CD4-positive, alpha-beta memory T cell (primary cell): ENCODE measurements at regions of chr13 and their contacts with region 1.

Region 1: DNA sequence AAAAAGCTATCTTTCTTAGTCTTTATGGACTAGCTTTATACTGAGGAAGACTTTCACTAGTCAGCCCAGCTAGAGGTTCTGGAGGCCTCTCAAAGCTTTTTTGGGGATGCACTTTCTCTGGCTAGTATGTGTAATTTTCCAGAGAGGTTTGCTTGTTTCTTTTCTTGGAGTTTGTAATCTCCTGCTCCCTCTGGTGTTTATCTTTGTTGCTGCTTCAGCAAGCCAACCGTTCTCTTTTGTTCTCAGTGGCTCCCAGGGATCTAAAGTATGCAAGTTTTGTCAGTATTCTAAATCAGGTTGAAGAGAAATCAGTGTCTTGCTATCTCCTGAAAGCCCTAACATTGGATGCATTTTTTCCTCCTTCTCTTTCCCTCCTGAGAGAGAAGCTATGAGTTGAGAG is 121.1 kb upstream of the MYO16 start:
- DNase-seq: peak in 4 of 5 donors; percentile 22 to 49 (median 28)
- H3K4me3 ChIP-seq: no peak overlapping the region
- H3K4me3 Mint-ChIP-seq: no peak overlapping the region
- H3K27ac ChIP-seq: no peak overlapping the region
- H3K27ac Mint-ChIP-seq: peak overlapping the region in 1 of 7 donors; percentile 21
- H3K4me1 ChIP-seq: peaks cover 3% of the 10 kb centered on the region
- H3K4me1 Mint-ChIP-seq: peaks cover 1 to 29% (median 7%) of the 10 kb centered on the region in 4 donors
- H3K27me3 ChIP-seq: no peaks in the 10 kb centered on the region
- H3K27me3 Mint-ChIP-seq: no peaks in the 10 kb centered on the region

Region 2: GRCh38 chr13:106772006-106772601 is 1736.2 kb before region 1 on chr13:
- CTCF ChIA-PET with region 1: no interaction called
- POLR2A ChIA-PET with region 1: no interaction called
- intact Hi-C with region 1: no loop called
- DNase-seq: no peak
- H3K4me3 ChIP-seq: no peak overlapping the region
- H3K4me3 Mint-ChIP-seq: no peak overlapping the region
- H3K27ac ChIP-seq: no peak overlapping the region
- H3K27ac Mint-ChIP-seq: no peak overlapping the region
- H3K4me1 ChIP-seq: no peaks in the 10 kb centered on the region
- H3K4me1 Mint-ChIP-seq: no peaks in the 10 kb centered on the region
- H3K27me3 ChIP-seq: no peaks in the 10 kb centered on the region
- H3K27me3 Mint-ChIP-seq: no peaks in the 10 kb centered on the region

Region 3: GRCh38 chr13:108176685-108177274 is 331.5 kb before region 1 on chr13:
- CTCF ChIA-PET with region 1: interaction called, 6 read pairs
- POLR2A ChIA-PET with region 1: no interaction called
- intact Hi-C with region 1: loop called (anchors 5 kb)
- DNase-seq: peak; percentile 33 to 58 (median 38)
- H3K4me3 ChIP-seq: no peak overlapping the region
- H3K4me3 Mint-ChIP-seq: no peak overlapping the region
- H3K27ac ChIP-seq: no peak overlapping the region
- H3K27ac Mint-ChIP-seq: no peak overlapping the region
- H3K4me1 ChIP-seq: no peaks in the 10 kb centered on the region
- H3K4me1 Mint-ChIP-seq: no peaks in the 10 kb centered on the region
- H3K27me3 ChIP-seq: no peaks in the 10 kb centered on the region
- H3K27me3 Mint-ChIP-seq: peaks cover 0 to 7% of the 10 kb centered on the region in 2 donors

Region 4: DNA sequence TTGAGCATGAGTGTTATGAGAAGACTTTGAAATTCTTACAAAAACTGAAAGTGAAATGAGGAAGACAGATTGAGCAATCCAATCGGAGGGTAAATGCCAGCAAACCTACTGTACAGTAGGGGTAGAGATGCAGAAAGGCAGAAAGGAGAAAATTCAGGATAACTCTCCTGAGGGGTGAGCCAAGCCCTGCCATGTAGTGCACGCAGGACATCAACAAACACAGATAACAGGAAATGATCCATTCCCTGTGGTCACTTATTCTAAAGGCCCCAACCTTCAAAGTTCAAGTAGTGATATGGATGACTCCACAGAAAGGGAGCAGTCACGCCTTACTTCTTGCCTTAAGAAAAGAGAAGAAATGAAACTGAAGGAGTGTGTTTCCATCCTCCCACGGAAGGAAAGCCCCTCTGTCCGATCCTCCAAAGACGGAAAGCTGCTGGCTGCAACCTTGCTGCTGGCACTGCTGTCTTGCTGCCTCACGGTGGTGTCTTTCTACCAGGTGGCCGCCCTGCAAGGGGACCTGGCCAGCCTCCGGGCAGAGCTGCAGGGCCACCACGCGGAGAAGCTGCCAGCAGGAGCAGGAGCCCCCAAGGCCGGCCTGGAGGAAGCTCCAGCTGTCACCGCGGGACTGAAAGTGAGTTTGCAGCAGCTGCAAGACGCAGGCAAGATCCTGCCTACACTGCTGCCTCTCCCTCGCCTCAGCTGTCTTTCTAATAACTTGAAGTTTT is 238.5 kb before region 1 on chr13 and contains the start of gene TNFSF13B:
- CTCF ChIA-PET with region 1: interaction called, 13 read pairs
- POLR2A ChIA-PET with region 1: no interaction called
- intact Hi-C with region 1: no loop called
- DNase-seq: peak; percentile 16 to 60 (median 28)
- H3K4me3 ChIP-seq: peak within 1 kb of the TSS; percentile 49 to 58
- H3K4me3 Mint-ChIP-seq: peak within 1 kb of the TSS; percentile 83 to 95 (median 90)
- H3K27ac ChIP-seq: peak within 1 kb of the TSS; percentile 51
- H3K27ac Mint-ChIP-seq: peak within 1 kb of the TSS; percentile 81 to 94 (median 90)
- H3K4me1 ChIP-seq: peaks cover 31% of the 10 kb centered on the region
- H3K4me1 Mint-ChIP-seq: peaks cover 32 to 72% (median 47%) of the 10 kb centered on the region in 4 donors
- H3K27me3 ChIP-seq: no peaks in the 10 kb centered on the region
- H3K27me3 Mint-ChIP-seq: no peaks in the 10 kb centered on the region
- total RNA-seq, gene TNFSF13B: 35.8 to 37.9 TPM

Region 5: DNA sequence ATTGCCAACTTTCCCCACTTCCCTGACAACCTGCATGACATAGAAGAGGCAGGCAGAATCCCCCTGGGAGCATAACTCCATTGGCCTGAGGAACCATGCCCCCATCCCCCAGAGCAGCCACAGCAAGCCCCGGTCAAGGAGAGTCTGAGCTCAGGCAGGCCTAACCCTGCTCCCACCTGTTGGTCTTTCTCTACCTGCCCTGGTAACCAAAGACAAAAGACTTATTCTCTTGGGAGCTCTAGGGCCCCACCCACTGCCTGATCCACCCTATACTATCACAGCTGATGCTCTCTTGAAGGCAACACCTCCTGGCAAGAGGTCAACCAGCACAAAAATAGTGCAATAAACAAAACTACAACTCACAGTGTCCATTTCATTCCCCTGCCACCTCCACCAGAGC is 179.4 kb before region 1 on chr13:
- CTCF ChIA-PET with region 1: interaction called, 114 read pairs
- POLR2A ChIA-PET with region 1: interaction called, 3 read pairs
- intact Hi-C with region 1: no loop called
- DNase-seq: no peak
- H3K4me3 ChIP-seq: no peak overlapping the region
- H3K4me3 Mint-ChIP-seq: no peak overlapping the region
- H3K27ac ChIP-seq: no peak overlapping the region
- H3K27ac Mint-ChIP-seq: no peak overlapping the region
- H3K4me1 ChIP-seq: peaks cover 16% of the 10 kb centered on the region
- H3K4me1 Mint-ChIP-seq: peaks cover 10 to 42% (median 27%) of the 10 kb centered on the region in 4 donors
- H3K27me3 ChIP-seq: no peaks in the 10 kb centered on the region
- H3K27me3 Mint-ChIP-seq: no peaks in the 10 kb centered on the region

Region 6: GRCh38 chr13:108419768-108420167 is 88.5 kb before region 1 on chr13:
- CTCF ChIA-PET with region 1: interaction called, 11 read pairs
- POLR2A ChIA-PET with region 1: no interaction called
- intact Hi-C with region 1: no loop called
- DNase-seq: no peak
- H3K4me3 ChIP-seq: no peak overlapping the region
- H3K4me3 Mint-ChIP-seq: peak overlapping the region in 1 of 8 donors; percentile 43
- H3K27ac ChIP-seq: no peak overlapping the region
- H3K27ac Mint-ChIP-seq: peak overlapping the region in 2 of 7 donors; percentile 70 to 73
- H3K4me1 ChIP-seq: peaks cover 11% of the 10 kb centered on the region
- H3K4me1 Mint-ChIP-seq: peaks cover 15 to 42% (median 23%) of the 10 kb centered on the region in 4 donors
- H3K27me3 ChIP-seq: no peaks in the 10 kb centered on the region
- H3K27me3 Mint-ChIP-seq: no peaks in the 10 kb centered on the region

Region 7: GRCh38 chr13:108632649-108633167 is 124.4 kb after region 1 on chr13:
- CTCF ChIA-PET with region 1: no interaction called
- POLR2A ChIA-PET with region 1: no interaction called
- intact Hi-C with region 1: no loop called
- DNase-seq: no peak
- H3K4me3 ChIP-seq: no peak overlapping the region
- H3K4me3 Mint-ChIP-seq: no peak overlapping the region
- H3K27ac ChIP-seq: no peak overlapping the region
- H3K27ac Mint-ChIP-seq: no peak overlapping the region
- H3K4me1 ChIP-seq: no peaks in the 10 kb centered on the region
- H3K4me1 Mint-ChIP-seq: peaks cover 0 to 3% (median 0%) of the 10 kb centered on the region in 4 donors
- H3K27me3 ChIP-seq: no peaks in the 10 kb centered on the region
- H3K27me3 Mint-ChIP-seq: no peaks in the 10 kb centered on the region

Region 8: DNA sequence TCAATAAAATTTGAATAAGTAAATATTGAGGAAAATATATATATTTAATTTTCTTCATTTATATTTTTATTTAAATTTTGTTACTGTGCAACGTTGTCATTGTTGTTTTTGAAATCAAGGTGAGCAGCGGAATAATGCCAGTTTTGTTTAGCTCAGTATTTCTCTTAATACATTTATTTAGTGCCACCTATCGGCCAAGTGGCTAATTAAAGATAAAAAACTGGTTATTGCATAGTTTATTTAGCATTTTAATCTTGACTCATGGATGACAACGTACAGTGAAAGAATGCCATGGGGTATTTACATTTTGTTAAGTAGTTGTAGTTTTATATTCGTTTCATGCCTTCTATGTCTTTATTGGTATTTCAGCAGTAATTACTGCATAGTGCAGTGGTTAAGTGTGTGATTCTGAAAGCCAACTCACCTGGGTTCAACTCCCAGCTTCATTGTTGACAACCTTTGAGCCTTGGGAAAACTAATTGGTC is 387.0 kb after region 1 on chr13:
- CTCF ChIA-PET with region 1: interaction called, 9 read pairs
- POLR2A ChIA-PET with region 1: no interaction called
- intact Hi-C with region 1: loop called (anchors 5 kb)
- DNase-seq: peak in 4 of 5 donors; percentile 19 to 31 (median 26)
- H3K4me3 ChIP-seq: no peak overlapping the region
- H3K4me3 Mint-ChIP-seq: no peak overlapping the region
- H3K27ac ChIP-seq: no peak overlapping the region
- H3K27ac Mint-ChIP-seq: no peak overlapping the region
- H3K4me1 ChIP-seq: peaks cover 8% of the 10 kb centered on the region
- H3K4me1 Mint-ChIP-seq: peaks cover 5 to 14% (median 10%) of the 10 kb centered on the region in 4 donors
- H3K27me3 ChIP-seq: no peaks in the 10 kb centered on the region
- H3K27me3 Mint-ChIP-seq: peaks cover 0 to 1% of the 10 kb centered on the region in 2 donors